ENCODE measurements at regions of chr6 and their contacts with region 1.

Region 1: DNA sequence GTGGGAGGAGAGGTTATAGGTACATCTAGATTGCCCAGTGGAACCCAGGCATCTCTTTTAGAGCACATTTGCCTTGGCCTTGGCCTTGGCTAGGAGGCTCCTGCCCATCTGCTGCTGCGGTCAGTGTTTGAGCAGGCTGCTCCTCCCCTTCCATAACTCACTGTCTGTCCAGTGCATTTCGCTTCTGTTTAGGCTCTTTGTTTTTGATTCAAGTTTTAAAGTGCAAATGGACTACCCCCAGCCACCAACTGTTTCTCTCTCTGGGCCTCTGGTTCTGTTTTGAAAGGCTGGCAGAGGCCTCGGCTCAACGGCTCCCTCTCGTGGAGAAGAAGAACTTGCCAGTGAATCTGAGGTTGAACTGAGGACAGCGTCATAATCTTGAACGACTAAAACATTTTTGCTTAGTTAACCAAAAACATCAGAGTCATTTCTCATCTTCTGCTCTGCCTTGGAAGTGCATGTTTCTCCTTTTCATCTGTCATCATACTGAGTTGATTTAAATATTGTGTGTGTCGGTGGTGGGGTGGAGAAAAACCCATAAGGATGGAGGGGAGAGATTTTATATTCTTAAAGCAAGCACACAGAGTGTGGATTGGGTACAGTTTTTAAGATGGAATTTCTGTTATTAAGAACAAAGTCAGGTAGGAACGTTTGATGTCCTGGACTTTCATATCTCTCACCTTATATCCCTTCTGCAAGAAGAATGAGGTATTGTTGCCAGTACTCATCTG is 171.4 kb downstream of the DTNBP1 start:
- DNase-seq: peak in 1 of 2 donors; percentile 81
- H3K4me3 ChIP-seq: no peak overlapping the region
- H3K27ac ChIP-seq: no peak overlapping the region
- H3K4me1 ChIP-seq: peaks cover 0 to 2% of the 10 kb centered on the region in 2 donors
- H3K27me3 ChIP-seq: no peaks in the 10 kb centered on the region
- CTCF ChIP-seq: peak; percentile 77 to 91 (median 86)

Region 2: DNA sequence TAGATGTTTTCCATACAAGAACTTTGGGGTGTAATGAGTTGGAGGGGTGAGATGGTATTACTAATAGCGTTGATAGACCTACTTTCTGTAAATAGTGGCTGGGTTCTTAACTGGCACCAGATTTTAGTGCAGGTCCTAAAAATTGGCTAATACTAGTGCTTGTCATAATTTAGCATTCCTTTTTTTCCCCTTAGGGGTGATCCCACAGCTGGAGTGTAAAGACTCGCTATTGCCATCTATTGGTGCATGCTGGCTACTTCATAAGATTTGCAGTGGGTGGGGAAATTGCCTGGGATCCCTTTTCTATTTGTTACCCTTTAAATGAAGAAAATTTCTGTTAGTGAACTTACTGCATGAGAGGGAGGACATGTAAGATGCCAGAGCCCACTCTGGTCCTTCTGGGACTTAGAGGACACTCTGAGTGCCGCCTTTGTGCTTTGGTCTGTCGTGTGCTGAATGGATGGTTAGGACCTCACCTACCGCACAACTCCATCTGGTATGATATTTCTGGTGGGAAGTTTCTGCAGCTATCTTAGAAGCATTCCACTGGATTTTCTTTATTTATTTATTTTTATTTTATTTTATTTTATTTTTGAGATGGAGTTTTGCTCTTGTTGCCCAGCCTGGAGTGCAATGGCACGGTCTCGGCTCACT is 50.1 kb before region 1 on chr6:
- intact Hi-C with region 1: loop called (anchors 5 kb)
- DNase-seq: no peak
- H3K4me3 ChIP-seq: no peak overlapping the region
- H3K27ac ChIP-seq: no peak overlapping the region
- H3K4me1 ChIP-seq: peaks cover 0 to 16% of the 10 kb centered on the region in 2 donors
- H3K27me3 ChIP-seq: no peaks in the 10 kb centered on the region
- CTCF ChIP-seq: peak; percentile 67 to 80 (median 76)

Region 3: GRCh38 chr6:15621203-15622044 is 130.0 kb after region 1 on chr6:
- intact Hi-C with region 1: loop called (anchors 5 kb)
- DNase-seq: no peak
- H3K4me3 ChIP-seq: no peak overlapping the region
- H3K27ac ChIP-seq: no peak overlapping the region
- H3K4me1 ChIP-seq: peaks cover 0 to 5% of the 10 kb centered on the region in 2 donors
- H3K27me3 ChIP-seq: no peaks in the 10 kb centered on the region
- CTCF ChIP-seq: no peak

Region 4: GRCh38 chr6:15744818-15745402 is 253.5 kb after region 1 on chr6:
- intact Hi-C with region 1: no loop called
- DNase-seq: no peak
- H3K4me3 ChIP-seq: no peak overlapping the region
- H3K27ac ChIP-seq: no peak overlapping the region
- H3K4me1 ChIP-seq: no peaks in the 10 kb centered on the region
- H3K27me3 ChIP-seq: no peaks in the 10 kb centered on the region
- CTCF ChIP-seq: no peak

Measured in ascending aorta (tissue), 2 donors.